ENCODE measurements at regions of chr9 and their contacts with region 1.

Region 1: DNA sequence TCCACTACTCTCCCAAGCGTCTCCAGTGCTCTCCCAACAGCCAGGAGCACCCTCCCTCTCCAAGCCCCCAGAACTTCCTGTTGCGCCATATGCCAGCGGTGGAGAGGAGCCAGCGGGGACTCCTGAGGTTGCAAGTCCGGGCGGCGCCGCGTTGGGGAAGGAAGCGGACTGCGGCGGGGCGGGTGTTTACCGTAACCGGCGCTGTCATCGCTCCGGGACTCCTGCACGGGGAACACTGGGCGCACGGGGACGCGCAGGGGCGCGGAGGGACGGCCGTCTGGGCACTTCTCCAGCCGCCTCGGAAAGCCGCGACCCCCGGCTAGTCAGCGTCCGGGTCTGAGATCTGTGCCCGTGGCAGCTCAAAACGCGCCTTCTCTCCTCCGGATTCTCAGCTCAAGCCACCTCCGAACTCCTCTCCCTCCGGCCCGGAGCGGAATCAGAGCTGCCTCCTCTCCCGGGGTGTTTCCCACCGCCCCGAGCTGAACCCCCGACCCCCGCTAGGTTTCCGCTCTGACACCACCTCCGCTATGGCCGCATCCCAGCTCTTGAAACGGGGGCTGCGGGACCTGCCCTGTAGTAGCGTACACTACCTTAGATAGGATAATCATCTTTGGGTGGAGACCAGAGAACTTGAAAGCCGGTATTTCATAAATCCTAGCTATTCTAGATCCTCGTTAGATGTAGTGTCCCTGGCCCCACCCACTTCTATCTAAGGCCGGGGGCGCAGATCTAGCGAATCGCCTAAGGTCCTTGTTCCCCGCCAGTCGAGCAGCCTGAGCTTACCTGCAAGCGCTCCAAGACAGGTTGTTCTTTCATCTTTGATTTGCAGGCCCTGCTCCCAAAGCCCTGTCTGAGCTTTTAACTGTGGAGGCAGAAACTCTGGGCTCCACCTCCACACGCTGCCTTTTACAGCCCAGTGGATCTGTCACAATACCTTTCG is at the start of gene TRPM6:
- DNase-seq: peak; percentile 43 to 71
- H3K4me3 ChIP-seq: peak within 1 kb of the TSS; percentile 59
- H3K4me1 ChIP-seq: no peaks in the 10 kb centered on the region; the same call in 1 of the 2 replicates
- H3K27me3 ChIP-seq: peaks cover 3% of the 10 kb centered on the region; the same call in 1 of the 2 replicates

Region 2: DNA sequence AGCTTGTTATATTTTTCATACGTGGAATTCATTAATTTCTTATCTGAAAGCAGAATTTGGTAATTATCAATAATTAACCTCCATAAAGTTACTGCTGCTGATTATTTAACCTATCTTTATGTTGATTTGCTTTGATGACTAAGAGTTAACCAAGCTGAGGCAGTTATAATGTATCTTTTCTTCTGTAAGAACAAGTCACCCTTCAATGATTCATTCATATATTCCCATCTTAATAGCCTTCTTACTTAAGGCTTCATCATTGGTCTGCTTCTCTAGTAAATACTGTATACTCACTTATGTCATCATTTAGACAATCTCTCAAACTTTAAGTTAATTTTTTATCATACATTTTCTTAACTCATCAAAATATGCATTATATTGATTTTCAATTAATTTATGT is 1143.5 kb before region 1 on chr9:
- in situ Hi-C with region 1: no loop called
- DNase-seq: no peak
- H3K4me3 ChIP-seq: no peak overlapping the region
- H3K4me1 ChIP-seq: no peaks in the 10 kb centered on the region
- H3K27me3 ChIP-seq: no peaks in the 10 kb centered on the region

Region 3: GRCh38 chr9:74940600-74940999 is 53.3 kb after region 1 on chr9:
- in situ Hi-C with region 1: loop called (anchors 10 kb)
- DNase-seq: peak; percentile 61 to 68
- H3K4me3 ChIP-seq: no peak overlapping the region
- H3K4me1 ChIP-seq: 0 out of 2 replicates have a peak, but pooled peaks cover 4% of the 10 kb centered on the region
- H3K27me3 ChIP-seq: no peaks in the 10 kb centered on the region

Measured in HAP-1 (cell line).